GM13977 (cell line): ENCODE measurements at regions of chr11 and their contacts with region 1.

Region 1: GRCh38 chr11:93234602-93235207 is 36.9 kb upstream of the SLC36A4 start:
- DNase-seq: peak; percentile 71
- CTCF ChIP-seq: peak; percentile 98

Region 2: DNA sequence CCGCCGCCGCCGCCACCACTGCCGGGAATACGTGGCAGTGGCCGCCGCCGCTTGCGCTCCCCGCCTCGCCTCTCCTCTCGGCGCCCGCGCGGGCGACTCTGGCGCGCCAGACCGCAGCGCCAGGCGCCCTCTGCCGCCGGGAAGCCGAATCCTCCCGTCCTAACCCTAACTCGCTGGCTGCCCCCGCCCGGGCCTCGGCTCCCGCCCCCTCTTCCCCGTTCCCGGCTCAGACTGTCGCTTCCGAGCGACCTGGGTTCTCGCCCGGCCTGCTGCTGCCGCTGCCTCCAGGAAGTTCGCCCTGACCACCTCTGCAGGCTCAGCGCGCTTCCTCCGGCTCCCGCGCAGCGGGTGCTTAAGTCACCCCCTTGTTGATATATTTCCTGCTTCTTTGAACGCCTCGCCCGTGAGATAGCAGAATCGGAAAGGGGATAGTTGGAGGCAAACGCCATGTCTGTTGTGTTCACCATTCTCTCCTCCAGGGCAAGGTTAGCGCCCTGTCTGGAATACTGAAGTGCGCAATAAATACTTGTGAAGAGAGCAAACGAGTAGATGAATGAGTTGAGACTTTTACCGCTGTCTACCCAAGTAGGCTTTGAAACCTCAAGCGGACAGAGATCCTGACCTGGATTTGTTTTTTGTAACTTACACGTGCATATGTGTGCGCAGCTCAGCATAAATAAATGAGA is 308.7 kb after region 1 on chr11 and contains the start of gene SMCO4:
- in situ Hi-C with region 1: loop called (anchors 10 kb)
- DNase-seq: peak; percentile 89
- CTCF ChIP-seq: peak; percentile 86

Region 3: GRCh38 chr11:93648167-93648566 is 413.5 kb after region 1 on chr11:
- in situ Hi-C with region 1: loop called (anchors 10 kb)
- DNase-seq: no peak
- CTCF ChIP-seq: peak; percentile 50